ENCODE measurements at regions of chr13 and their contacts with region 1.

Region 1: DNA sequence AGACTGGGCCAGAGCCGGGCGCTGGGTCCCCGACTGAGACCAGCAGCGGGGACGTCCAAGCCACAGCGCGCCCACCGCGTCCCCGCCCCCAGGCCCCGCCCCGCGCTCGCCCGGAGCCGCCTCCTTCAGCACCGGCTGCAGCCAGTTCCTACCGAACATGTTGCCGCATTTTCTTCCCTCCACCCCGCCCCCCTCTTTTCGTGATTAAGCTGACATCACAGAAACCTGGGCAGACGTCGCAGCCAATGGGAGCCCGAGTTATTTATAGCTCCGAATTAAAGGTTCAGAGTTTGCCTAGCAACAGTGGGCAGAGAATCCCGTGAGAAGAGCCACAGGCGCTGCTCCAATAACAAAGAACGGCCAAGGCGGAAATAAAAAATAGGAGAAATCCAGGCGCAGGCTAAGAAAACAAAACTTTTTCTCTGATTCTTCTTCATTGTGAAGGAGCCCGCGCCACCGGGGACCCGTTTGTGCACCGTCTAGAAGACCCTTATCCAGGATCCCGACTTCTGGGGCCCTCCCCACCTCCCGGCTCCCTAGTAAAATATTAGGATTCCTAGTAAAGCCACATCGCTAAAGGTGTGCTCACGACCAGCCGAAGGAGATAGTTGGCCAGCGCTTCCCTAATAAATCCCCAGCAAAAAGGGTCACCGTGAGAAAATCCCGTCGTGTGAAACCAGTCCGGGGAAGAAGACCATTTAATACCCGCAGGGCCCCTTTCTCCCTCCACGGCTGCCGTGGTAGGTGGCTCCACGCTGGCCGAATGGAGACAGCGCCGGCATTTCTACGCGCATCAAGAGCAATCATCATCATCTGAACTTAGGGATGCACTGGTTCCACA is 61.7 kb downstream of the SERP2 start:
- DNase-seq: peak; percentile 60 to 92 (median 87)
- ATAC-seq: peak; percentile 82 to 88 (median 84)
- H3K4me3 ChIP-seq: peak overlapping the region; percentile 65 to 92
- H3K4me3 Mint-ChIP-seq: peak overlapping the region; percentile 83 to 86 (median 86)
- H3K27ac ChIP-seq: peak overlapping the region; percentile 89
- H3K27ac Mint-ChIP-seq: peak overlapping the region; percentile 32 to 66
- H3K4me1 ChIP-seq: peaks cover 4 to 25% of the 10 kb centered on the region in 2 experiments
- H3K4me1 Mint-ChIP-seq: peaks cover 29 to 33% (median 30%) of the 10 kb centered on the region in 3 donors
- H3K27me3 ChIP-seq: peaks cover 0 to 14% of the 10 kb centered on the region in 2 experiments
- H3K27me3 Mint-ChIP-seq: peaks cover 0 to 17% of the 10 kb centered on the region in 2 donors

Region 2: GRCh38 chr13:43905435-43906031 is 529.8 kb before region 1 on chr13:
- CTCF ChIA-PET with region 1: interaction called, 34 to 48 read pairs
- POLR2A ChIA-PET with region 1: interaction called in 1 of 2 experiments, 3 read pairs
- DNase-seq: peak in 15 of 35 experiments; percentile 3 to 73 (median 12)
- ATAC-seq: peak; percentile 56 to 72 (median 69)
- H3K4me3 ChIP-seq: no peak overlapping the region
- H3K4me3 Mint-ChIP-seq: no peak overlapping the region
- H3K27ac ChIP-seq: no peak overlapping the region
- H3K27ac Mint-ChIP-seq: no peak overlapping the region
- H3K4me1 ChIP-seq: no peaks in the 10 kb centered on the region
- H3K4me1 Mint-ChIP-seq: peaks cover 0 to 6% (median 3%) of the 10 kb centered on the region in 3 donors
- H3K27me3 ChIP-seq: no peaks in the 10 kb centered on the region
- H3K27me3 Mint-ChIP-seq: peaks cover 6 to 15% of the 10 kb centered on the region in 2 donors

Region 3: GRCh38 chr13:44052780-44053184 is 382.6 kb before region 1 on chr13:
- CTCF ChIA-PET with region 1: interaction called, 6 to 22 read pairs
- POLR2A ChIA-PET with region 1: no interaction called
- DNase-seq: no peak
- ATAC-seq: no peak
- H3K4me3 ChIP-seq: no peak overlapping the region
- H3K4me3 Mint-ChIP-seq: no peak overlapping the region
- H3K27ac ChIP-seq: no peak overlapping the region
- H3K27ac Mint-ChIP-seq: no peak overlapping the region
- H3K4me1 ChIP-seq: no peaks in the 10 kb centered on the region
- H3K4me1 Mint-ChIP-seq: peaks cover 0 to 8% (median 0%) of the 10 kb centered on the region in 3 donors
- H3K27me3 ChIP-seq: peaks cover 0 to 6% of the 10 kb centered on the region in 2 experiments
- H3K27me3 Mint-ChIP-seq: peaks cover 26 to 30% of the 10 kb centered on the region in 2 donors

Region 4: GRCh38 chr13:44274452-44275205 is 160.7 kb before region 1 on chr13:
- CTCF ChIA-PET with region 1: interaction called, 3 to 5 read pairs
- POLR2A ChIA-PET with region 1: interaction called in 1 of 2 experiments, 24 read pairs
- DNase-seq: peak in 29 of 35 experiments; percentile 8 to 85 (median 35)
- ATAC-seq: peak; percentile 89 to 95 (median 92)
- H3K4me3 ChIP-seq: peak overlapping the region; percentile 26 to 43
- H3K4me3 Mint-ChIP-seq: peak overlapping the region; percentile 56 to 75 (median 68)
- H3K27ac ChIP-seq: peak overlapping the region; percentile 95
- H3K27ac Mint-ChIP-seq: peak overlapping the region; percentile 94 to 95
- H3K4me1 ChIP-seq: peaks cover 20% of the 10 kb centered on the region in 2 experiments
- H3K4me1 Mint-ChIP-seq: peaks cover 49 to 53% (median 50%) of the 10 kb centered on the region in 3 donors
- H3K27me3 ChIP-seq: peaks cover 0 to 3% of the 10 kb centered on the region in 2 experiments
- H3K27me3 Mint-ChIP-seq: peaks cover 0 to 1% of the 10 kb centered on the region in 2 donors

Measured in T-cell (primary cell).